ENCODE measurements at regions of chr21 and their contacts with region 1.

Region 1: DNA sequence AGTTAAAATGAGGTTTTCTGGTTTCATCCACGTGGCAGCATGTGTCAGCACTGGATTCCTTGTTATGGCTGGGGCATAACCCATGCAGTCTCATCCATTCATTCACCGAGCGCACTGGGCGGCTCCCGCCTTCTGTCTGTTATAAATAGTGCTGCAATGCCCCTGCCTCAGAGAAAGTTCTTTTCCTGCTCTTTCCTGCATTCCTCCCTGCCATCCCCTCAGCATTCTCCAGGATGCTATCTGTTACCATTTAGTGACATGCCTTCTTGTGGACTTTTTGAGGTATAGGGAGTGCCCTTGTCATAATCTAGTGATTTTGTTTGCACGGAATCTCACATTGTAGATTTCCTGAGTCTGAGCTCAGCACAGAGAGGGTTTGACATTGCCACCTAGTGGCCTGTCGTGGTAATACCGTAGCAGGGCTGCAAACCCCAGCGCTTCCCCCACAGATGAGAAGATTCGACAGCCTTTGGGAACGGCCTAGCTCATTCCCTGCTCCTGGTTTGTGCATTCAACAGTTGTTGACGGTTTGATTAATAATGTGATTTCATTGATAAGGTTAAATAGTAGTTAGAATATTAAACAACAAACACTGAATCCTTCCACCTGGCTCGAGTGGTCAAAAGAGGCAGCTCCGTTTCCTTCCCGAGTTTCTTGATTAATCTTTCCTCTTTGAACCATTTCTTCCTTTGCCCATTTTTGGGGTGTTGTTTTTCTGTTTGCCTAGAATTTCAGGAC is 46.3 kb downstream of the UMODL1 start:
- DNase-seq: peak; percentile 67 to 77
- ATAC-seq: peak; percentile 81 to 90 (median 84)
- H3K4me3 ChIP-seq: no peak overlapping the region
- H3K27ac ChIP-seq: no peak overlapping the region
- H3K4me1 ChIP-seq: no peaks in the 10 kb centered on the region
- H3K27me3 ChIP-seq: peaks cover 0 to 67% (median 4%) of the 10 kb centered on the region in 3 donors
- CTCF ChIP-seq: peak; percentile 93

Region 2: GRCh38 chr21:41612674-41613532 is 504.5 kb before region 1 on chr21:
- intact Hi-C with region 1: loop called in 1 of 2 experiments (anchors 5 kb)
- DNase-seq: peak; percentile 83 to 90
- ATAC-seq: peak; percentile 63 to 87 (median 77)
- H3K4me3 ChIP-seq: no peak overlapping the region
- H3K27ac ChIP-seq: peak overlapping the region; percentile 21
- H3K4me1 ChIP-seq: no peaks in the 10 kb centered on the region
- H3K27me3 ChIP-seq: peaks cover 0 to 38% (median 8%) of the 10 kb centered on the region in 3 donors
- CTCF ChIP-seq: peak; percentile 39

Region 3: DNA sequence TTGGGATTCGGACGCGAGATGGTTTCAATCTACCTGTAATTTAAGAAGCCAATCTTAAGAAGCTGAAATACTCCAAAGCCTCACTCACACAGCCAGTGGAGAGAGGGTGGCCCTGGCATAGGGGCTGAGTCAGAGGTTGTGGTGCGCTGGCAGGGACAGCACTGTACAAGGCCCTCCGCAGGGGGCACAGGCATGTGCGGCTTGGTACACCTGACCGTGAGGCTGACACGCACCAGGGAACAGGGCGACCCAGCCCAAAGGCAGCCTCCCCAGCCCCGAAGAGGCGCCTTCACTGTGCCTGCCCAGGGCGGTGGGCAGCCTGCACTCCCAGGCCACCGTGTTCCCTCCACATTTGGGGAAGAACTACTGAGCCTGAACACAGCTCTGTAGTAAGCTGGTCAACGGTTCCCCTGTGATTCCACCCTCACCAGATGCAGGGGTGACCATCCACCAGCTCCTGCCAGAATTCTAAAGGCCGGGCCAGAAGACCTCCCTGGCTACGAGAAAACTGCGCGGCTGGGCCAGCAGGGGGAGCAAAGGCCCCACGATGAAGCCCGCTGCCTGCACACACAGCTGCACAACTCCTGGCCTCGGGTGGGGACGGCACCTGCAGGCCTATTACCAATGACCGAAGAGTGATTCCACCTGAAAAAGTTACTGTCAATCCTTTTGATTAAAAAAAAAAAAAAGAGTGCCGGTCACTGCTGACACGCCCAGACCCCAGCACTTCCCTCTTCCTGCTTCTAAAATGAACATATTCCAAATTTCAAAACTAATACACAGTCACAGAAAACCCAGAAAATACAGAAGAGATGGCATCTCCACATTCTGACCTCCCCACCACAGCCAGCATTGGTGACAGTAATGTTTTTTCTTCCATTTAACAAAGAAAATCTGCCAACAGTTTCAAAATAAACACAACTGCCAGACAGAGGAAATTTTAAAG is 300.9 kb before region 1 on chr21:
- intact Hi-C with region 1: loop called (anchors 1 to 5 kb)
- DNase-seq: peak in 1 of 2 donors; percentile 55
- ATAC-seq: peak; percentile 80 to 88 (median 82)
- H3K4me3 ChIP-seq: no peak overlapping the region
- H3K27ac ChIP-seq: no peak overlapping the region
- H3K4me1 ChIP-seq: no peaks in the 10 kb centered on the region
- H3K27me3 ChIP-seq: no peaks in the 10 kb centered on the region
- CTCF ChIP-seq: peak; percentile 70

Region 4: GRCh38 chr21:41879190-41879998 is 238.0 kb before region 1 on chr21 and contains the start of gene PRDM15:
- intact Hi-C with region 1: loop called in 1 of 2 experiments (anchors 5 kb)
- DNase-seq: peak; percentile 90 to 91
- ATAC-seq: peak; percentile 63 to 77 (median 76)
- H3K4me3 ChIP-seq: peak within 1 kb of the TSS; percentile 85
- H3K27ac ChIP-seq: peak within 1 kb of the TSS; percentile 93
- H3K4me1 ChIP-seq: peaks cover 6% of the 10 kb centered on the region
- H3K27me3 ChIP-seq: no peaks in the 10 kb centered on the region
- CTCF ChIP-seq: no peak
- total RNA-seq, gene PRDM15: 3.2 to 6.4 (median 4.4) TPM

Region 5: DNA sequence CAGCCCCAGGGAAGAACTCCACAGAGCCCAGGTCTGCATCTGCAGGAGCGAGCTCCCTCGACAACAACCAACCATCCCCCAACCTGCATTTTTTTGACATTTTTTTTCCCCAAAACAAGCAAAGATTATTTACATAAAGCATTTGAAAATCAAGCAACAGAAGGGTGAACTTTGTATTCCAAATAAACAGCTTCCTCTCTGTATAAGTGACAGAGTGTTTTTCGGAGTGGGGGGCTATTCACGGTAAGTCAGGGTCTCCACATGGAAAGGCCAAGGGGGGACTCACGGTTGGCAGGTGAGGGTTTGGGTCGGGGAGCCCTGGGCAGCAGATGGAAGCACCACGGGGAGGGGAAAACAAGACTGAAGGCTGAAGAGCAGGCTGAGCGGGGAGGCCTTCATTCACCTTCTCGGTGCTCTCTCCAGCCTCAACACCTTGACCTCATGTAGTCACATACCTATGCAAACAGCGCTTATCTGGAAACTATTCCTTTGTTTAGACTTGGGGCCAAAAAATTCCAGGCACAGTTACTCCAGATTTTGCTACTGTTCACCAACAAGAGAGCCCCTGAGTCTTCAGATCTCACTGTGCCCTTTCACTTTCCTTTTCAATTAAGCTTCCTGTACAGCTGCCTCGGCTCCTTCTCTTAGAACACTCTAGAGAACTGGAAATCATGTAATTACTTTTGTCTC is 191.1 kb before region 1 on chr21:
- intact Hi-C with region 1: loop called in 1 of 2 experiments (anchors 5 kb)
- DNase-seq: no peak
- ATAC-seq: peak in 1 of 4 donors; percentile 68
- H3K4me3 ChIP-seq: peak overlapping the region; percentile 55
- H3K27ac ChIP-seq: peak overlapping the region; percentile 68
- H3K4me1 ChIP-seq: peaks cover 5% of the 10 kb centered on the region
- H3K27me3 ChIP-seq: no peaks in the 10 kb centered on the region
- CTCF ChIP-seq: no peak

Region 6: DNA sequence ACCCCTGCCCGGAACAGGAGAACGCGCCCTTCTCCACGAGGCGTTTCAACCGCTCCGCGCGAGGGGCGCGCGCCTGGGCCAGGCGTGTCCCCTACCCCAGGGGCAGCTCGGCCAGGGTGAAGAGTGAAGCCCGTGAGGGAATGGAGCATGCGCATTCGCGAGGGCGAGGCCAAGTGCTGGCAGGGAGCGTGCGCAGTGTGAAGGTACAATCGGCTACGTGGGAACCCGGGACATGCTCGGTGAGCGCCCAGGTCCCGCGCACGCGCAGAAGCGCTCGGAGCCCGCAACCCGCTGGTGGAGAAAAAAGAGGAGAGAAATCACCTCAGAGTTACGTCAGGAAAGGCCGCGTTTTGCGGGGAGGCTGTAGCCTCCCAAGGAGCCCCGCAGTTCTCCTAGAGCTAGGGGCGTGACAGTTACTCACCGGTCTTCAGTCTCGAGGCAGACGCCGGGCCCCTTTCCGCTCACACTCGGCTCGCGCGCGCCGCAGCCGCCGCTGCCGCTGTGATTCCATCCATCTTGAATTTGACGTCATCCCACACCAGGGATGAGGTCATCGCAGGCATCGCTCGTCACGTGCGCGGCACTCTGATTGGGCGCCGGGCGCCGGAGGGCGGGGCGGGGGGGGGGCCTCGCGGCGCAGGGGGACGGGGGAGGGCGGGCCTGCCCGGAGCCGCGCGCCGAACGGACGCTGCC is 107.4 kb before region 1 on chr21 and contains the start of gene ZBTB21:
- intact Hi-C with region 1: loop called in 1 of 2 experiments (anchors 5 kb)
- DNase-seq: peak; percentile 99
- ATAC-seq: peak; percentile 96
- H3K4me3 ChIP-seq: peak within 1 kb of the TSS; percentile 88
- H3K27ac ChIP-seq: peak within 1 kb of the TSS; percentile 99
- H3K4me1 ChIP-seq: no peaks in the 10 kb centered on the region
- H3K27me3 ChIP-seq: peaks cover 0 to 12% (median 0%) of the 10 kb centered on the region in 3 donors
- CTCF ChIP-seq: no peak
- total RNA-seq, gene ZBTB21: 4.5 to 8.8 (median 4.6) TPM

Region 7: DNA sequence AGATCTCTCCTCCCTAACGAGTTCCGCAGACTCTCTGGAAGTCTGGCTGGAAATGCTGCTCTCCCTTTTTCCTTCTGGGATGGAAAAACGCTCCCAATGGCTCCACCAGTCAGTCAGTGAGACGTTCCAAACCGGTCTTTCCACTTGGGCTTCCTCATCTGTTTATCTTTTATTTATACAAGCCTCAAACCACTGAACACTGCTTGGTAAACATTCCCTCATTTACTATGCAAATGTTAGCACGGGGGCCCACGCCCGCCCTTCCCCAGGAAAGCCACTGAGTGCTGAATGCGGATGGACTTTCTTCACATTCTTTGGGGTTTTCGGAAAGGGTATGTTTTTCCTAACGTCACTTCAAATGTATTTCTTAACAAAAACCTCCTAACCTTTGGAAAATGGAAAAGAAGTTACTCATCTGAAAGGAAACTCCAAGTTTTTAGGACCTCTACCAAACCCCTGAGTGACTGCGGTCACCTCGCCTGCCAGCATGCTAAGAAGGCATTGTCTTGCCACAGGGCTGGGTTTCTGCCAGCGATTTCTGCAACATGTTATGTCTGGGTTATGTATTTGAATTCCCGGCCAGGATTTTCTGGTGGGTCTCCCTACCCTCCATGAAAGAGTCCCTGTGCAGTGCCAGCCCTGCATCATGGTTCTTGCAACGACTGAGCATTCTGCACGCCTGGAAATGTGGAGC is 60.3 kb before region 1 on chr21:
- intact Hi-C with region 1: loop called in 1 of 2 experiments (anchors 10 kb)
- DNase-seq: peak in 1 of 2 donors; percentile 50
- ATAC-seq: no peak
- H3K4me3 ChIP-seq: no peak overlapping the region
- H3K27ac ChIP-seq: no peak overlapping the region
- H3K4me1 ChIP-seq: peaks cover 3% of the 10 kb centered on the region
- H3K27me3 ChIP-seq: peaks cover 0 to 5% (median under 1%) of the 10 kb centered on the region in 3 donors
- CTCF ChIP-seq: no peak

Region 8: GRCh38 chr21:42220138-42220701 is 102.8 kb after region 1 on chr21:
- intact Hi-C with region 1: no loop called
- DNase-seq: peak; percentile 48 to 70
- ATAC-seq: peak; percentile 43 to 86 (median 80)
- H3K4me3 ChIP-seq: peak overlapping the region; percentile 92
- H3K27ac ChIP-seq: peak overlapping the region; percentile 73
- H3K4me1 ChIP-seq: peaks cover 15% of the 10 kb centered on the region
- H3K27me3 ChIP-seq: peaks cover 0 to 2% (median 0%) of the 10 kb centered on the region in 3 donors
- CTCF ChIP-seq: no peak

Region 9: DNA sequence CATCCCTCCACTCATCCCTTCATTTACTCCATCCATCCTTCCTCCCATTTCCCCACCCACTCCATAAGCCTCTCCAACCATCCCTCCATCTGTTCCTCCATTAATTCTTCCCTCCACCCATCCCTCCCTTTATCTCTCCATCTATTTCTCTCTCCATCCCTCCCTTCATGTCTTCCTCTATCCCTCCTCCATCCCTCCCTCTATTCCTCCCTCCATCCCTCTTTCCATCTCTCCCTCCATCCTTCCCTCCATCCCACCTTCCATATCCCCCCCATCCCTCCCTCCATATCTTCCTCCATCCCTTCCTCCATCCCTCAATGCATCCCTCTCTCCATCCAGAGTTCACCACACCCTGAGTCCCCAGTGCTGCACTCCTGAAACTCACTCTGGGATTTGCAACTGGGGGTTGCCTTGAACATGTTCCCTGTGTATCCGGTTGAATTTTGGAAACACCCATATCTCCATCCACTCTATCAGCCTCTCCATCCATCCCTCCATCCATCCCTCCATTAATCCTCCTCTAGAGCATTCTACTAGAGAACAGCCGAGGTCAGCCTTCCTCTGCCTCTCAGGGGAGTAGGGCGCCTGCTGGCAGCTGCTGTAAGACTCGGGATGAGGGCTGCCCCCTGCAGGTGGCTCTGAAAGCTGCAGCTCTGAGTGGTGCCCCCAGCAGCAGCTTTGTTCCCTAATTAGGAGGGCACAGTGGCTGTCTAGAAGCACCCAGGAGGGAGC is 140.9 kb after region 1 on chr21:
- intact Hi-C with region 1: no loop called
- DNase-seq: peak; percentile 66 to 86
- ATAC-seq: peak; percentile 78 to 88 (median 82)
- H3K4me3 ChIP-seq: no peak overlapping the region
- H3K27ac ChIP-seq: no peak overlapping the region
- H3K4me1 ChIP-seq: peaks cover 20% of the 10 kb centered on the region
- H3K27me3 ChIP-seq: no peaks in the 10 kb centered on the region
- CTCF ChIP-seq: peak; percentile 81

Measured in psoas muscle (tissue), 8 donors.